ENCODE measurements at regions of chr18 and their contacts with region 1.

Region 1: GRCh38 chr18:23812546-23813440 is 123.5 kb downstream of the LAMA3 start:
- DNase-seq: peak; percentile 32
- CTCF ChIP-seq: peak; percentile 41

Region 2: DNA sequence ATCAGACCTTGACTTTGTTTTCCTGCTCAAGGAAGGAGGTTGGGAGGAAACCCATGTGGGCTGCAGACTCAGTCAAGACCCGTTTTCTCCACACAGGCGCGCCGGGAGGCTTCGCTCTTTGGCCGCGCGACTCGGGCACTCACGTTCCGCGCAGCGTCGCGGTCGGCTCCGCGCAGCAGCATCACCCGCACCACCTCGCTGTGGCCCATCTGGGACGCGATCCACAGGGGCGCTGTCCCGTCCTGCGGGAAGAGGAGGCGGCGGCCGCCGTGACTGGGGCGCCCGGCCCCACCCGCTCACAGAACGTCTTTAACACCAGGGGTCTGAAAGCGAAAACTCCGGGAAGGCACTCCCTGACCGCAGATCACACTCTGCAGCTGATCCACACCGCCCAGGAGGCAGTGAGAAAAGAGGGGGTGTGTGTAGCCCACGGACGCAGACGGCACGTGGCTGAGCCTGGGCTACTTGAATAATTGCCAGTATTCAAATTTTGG is 193.4 kb before region 1 on chr18:
- CTCF ChIA-PET with region 1: interaction called, 11 read pairs
- POLR2A ChIA-PET with region 1: no interaction called
- DNase-seq: peak; percentile 44
- CTCF ChIP-seq: peak; percentile 19

Region 3: DNA sequence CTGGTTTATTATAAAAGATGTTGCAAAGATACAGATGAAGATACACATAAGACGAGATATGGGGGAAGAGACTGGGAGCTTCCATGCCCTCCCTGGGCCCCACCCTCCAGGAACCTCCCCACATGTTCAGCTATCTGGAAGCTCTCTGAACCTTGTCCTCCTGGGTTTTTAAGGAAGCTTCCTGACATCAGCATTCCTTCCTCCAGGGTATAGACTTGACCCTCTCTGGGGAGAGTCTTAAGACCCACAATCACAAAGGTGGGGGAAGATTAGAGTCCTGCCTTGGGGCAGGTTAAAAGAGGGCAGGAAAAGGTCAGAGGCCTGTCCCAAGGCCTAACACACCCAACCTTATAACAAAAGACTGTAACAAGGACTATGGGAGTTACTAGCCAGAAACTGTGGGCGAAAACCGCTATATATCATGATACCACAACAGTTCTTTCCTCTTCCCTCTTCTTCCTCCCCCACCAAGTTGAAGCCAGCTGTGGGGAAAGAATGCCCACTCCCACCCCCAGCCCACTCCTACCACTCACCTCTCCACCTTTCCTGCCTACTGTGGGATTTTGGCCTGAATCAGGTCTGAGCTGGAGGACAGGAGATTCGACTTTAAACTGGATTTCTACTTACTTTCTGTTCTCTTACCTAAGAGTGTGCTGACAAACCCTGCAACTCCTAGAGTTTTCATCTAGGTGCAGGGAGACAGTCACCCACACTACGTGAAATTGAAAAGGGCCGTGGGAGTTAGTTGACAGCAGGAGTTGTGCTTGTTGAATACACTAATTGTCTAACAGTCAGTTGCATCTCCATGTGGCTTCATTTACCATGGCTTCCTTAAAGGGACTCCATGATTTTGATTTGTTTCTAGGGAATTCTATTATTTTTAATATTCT is 18.6 kb before region 1 on chr18:
- CTCF ChIA-PET with region 1: interaction called, 13 read pairs
- POLR2A ChIA-PET with region 1: no interaction called
- DNase-seq: no peak
- CTCF ChIP-seq: no peak

Region 4: GRCh38 chr18:23998811-23999210 is 186.0 kb after region 1 on chr18:
- CTCF ChIA-PET with region 1: no interaction called
- POLR2A ChIA-PET with region 1: no interaction called
- DNase-seq: no peak
- CTCF ChIP-seq: no peak

Region 5: DNA sequence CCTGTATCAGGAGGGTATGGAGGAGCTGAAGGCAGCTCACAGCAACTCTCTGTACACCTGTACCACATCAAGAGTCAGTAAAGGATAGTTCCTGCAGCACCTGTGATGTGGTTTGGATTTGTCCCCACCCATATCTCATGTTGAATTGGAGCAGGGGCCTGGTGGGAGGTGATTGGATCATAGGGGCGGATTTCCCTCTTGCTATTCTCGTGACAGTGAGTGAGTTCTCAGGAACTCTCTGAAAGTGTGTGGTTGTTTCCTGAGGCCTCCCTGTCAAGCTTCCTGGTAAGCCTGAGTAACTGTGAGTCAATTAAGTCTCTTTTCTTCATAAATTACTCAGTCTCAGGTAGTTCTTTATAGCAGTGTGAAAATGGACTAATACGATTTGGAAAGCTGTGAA is 556.0 kb after region 1 on chr18:
- CTCF ChIA-PET with region 1: no interaction called
- POLR2A ChIA-PET with region 1: no interaction called
- DNase-seq: no peak
- CTCF ChIP-seq: no peak

Measured in GM10248 (cell line).